ENCODE measurements at regions of chr6 and their contacts with region 1.

Region 1: GRCh38 chr6:34161857-34162515 is 16.1 kb upstream of the GRM4 start:
- DNase-seq: no peak
- ATAC-seq: no peak
- H3K4me3 ChIP-seq: no peak overlapping the region
- H3K27ac ChIP-seq: no peak overlapping the region
- H3K4me1 ChIP-seq: peaks cover 0 to 4% of the 10 kb centered on the region in 2 experiments; a peak in 2 of 4 replicates
- H3K27me3 ChIP-seq: no peaks in the 10 kb centered on the region
- CTCF ChIP-seq: no peak
- POLR2A ChIP-seq: no peak
- RAD21 ChIP-seq: no peak

Region 2: GRCh38 chr6:34189806-34190503 is 28.0 kb after region 1 on chr6:
- CTCF ChIA-PET with region 1: interaction called, 8 read pairs
- POLR2A ChIA-PET with region 1: interaction called, 3 read pairs
- RAD21 ChIA-PET with region 1: no interaction called
- intact Hi-C with region 1: loop called (anchors 2 kb)
- DNase-seq: no peak
- ATAC-seq: no peak
- H3K4me3 ChIP-seq: no peak overlapping the region
- H3K27ac ChIP-seq: no peak overlapping the region
- H3K4me1 ChIP-seq: no peaks in the 10 kb centered on the region
- H3K27me3 ChIP-seq: no peaks in the 10 kb centered on the region
- CTCF ChIP-seq: no peak
- POLR2A ChIP-seq: no peak
- RAD21 ChIP-seq: no peak